ENCODE measurements at regions of chr16 and their contacts with region 1.

Region 1: DNA sequence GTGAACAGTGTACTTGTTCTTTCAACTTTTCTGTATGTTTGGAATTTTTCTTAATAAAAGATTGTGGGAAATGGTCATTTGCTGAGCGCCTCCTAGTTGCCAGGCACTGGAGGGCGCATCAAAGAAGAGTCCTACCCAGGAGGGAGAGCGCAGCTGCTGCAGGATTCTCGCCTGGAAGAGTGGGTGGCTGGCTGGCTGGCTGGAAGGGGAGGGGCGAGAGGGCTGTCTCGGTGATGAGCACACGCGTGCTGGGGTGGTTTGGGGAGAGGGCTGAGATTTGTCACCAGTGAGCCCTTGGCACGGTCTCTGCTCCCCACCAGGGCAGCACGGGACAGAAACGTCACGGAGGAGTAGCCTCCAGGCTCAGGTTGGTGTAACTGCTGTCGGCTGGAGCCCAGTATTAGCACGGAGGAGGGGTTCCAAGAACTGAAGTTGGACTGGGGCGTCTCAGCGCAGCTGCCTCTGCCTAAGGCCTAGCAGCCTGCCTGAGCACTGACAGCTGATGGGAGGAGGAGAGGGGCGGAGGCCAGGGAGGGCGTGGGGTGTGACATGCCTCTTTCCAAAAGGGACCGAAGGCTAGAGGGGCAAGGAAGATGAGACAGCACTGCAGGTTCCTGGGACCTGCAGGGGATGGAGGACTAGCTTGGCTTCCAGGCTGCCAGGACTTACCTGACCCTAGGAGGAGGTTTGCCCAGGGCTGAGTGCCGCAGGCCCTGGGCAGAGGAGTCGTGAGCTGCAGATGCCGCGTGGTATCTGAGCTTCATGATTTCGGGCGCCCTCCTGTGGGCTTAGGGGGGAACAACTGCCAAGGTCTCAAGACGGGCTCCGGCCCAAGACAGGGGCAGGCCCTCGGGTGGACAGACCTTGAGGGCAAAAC is 5.7 kb downstream of the LDHD start:
- DNase-seq: peak; percentile 94
- ATAC-seq: peak; percentile 86

Region 2: DNA sequence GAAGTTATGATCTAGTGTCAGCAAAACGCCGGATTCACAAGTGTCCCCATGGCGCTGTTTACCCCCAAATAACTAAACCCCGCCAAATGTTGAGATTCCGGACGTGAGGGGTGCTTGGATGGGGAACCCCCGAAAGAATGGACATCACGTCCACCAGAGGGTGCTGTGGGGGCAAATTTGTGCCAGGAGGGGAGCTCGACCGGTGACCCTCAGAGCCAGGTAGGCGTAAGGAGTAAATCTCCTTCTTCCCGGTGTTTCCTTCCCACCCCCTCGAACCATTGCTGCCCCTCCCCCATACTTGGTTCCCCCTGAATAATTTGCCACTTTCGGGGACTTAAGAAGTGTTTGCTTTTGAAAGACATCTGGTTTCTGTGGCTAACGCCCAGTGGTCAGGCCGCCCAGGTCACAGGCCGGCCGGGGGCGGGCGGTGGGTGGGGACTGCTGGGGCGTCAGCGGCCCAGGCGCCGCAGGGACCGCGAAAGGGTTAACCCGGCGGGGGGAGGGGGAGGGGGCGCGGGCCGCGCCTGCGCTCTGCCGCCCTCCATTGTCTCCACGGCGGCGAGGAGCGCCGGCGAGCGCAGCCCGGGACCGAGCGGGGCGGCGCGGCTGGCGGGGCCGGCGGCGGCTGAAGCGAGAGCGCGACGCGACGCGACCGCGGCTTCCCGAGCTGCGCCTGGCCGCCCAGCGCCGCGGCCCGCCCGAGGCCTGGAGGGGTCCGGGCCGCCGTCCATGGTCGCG is 112.2 kb before region 1 on chr16 and contains the start of gene ZNRF1:
- intact Hi-C with region 1: loop called (anchors 2 kb)
- DNase-seq: peak; percentile 90
- ATAC-seq: peak; percentile 89
- total RNA-seq, gene ZNRF1: 24.6 TPM

Region 3: GRCh38 chr16:75053791-75054555 is 56.9 kb before region 1 on chr16:
- intact Hi-C with region 1: loop called (anchors 10 kb)
- DNase-seq: peak; percentile 78
- ATAC-seq: peak; percentile 27

Measured in sciatic nerve (tissue), 2 donors.